Ovary (tissue), 10 donors: ENCODE measurements at regions of chr6 and their contacts with region 1.

Region 1: DNA sequence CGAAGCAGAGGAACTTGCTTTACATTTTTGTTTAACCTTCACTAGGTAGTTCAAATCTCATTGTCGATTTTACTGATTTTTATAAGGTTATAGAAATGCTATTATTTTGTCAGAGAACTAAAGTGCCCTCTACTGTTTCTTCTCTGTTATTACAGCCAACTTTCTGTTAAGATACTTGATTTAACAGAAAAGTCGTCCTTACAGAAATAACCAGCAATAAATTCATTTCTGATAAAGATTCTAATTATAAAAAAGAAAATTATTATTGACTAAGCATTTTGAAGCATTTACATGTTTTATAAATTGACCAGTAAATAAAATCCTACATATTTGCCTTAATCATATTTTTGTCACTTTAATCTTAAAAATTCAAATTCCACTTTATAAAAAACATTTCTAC is 60.8 kb downstream of the OGFRL1 start:
- DNase-seq: no peak
- H3K4me3 ChIP-seq: no peak overlapping the region
- H3K27ac ChIP-seq: no peak overlapping the region
- H3K4me1 ChIP-seq: no peaks in the 10 kb centered on the region
- H3K27me3 ChIP-seq: no peaks in the 10 kb centered on the region
- CTCF ChIP-seq: peak in 2 of 3 donors; percentile 9 to 23
- EP300 ChIP-seq: no peak
- POLR2A ChIP-seq: no peak

Region 2: DNA sequence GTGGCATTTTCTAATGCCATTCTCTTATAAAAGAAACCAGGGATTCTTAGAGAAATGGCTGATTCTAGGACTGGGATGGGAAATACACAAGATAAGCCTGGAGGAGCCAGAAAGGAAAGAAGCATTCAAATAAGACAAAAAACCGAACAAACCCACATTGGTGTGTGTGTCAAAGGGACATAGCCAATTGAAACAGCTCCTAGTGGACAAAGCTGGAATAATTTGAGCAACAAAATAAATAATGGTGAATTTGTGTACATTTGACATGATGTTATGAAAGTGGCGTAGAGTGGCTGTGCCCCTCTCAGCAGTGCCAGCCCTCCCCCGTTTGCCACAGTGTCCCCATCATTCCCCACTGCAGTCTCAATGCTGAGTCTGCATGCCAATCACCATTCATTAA is 448.1 kb before region 1 on chr6:
- intact Hi-C with region 1: no loop called
- DNase-seq: no peak
- H3K4me3 ChIP-seq: no peak overlapping the region
- H3K27ac ChIP-seq: no peak overlapping the region
- H3K4me1 ChIP-seq: no peaks in the 10 kb centered on the region
- H3K27me3 ChIP-seq: no peaks in the 10 kb centered on the region
- CTCF ChIP-seq: no peak
- EP300 ChIP-seq: no peak
- POLR2A ChIP-seq: no peak

Region 3: GRCh38 chr6:70973604-70974003 is 375.8 kb before region 1 on chr6:
- intact Hi-C with region 1: loop called in 1 of 4 experiments (anchors 10 kb)
- DNase-seq: no peak
- H3K4me3 ChIP-seq: no peak overlapping the region
- H3K27ac ChIP-seq: no peak overlapping the region
- H3K4me1 ChIP-seq: no peaks in the 10 kb centered on the region
- H3K27me3 ChIP-seq: no peaks in the 10 kb centered on the region
- CTCF ChIP-seq: no peak
- EP300 ChIP-seq: no peak
- POLR2A ChIP-seq: no peak

Region 4: DNA sequence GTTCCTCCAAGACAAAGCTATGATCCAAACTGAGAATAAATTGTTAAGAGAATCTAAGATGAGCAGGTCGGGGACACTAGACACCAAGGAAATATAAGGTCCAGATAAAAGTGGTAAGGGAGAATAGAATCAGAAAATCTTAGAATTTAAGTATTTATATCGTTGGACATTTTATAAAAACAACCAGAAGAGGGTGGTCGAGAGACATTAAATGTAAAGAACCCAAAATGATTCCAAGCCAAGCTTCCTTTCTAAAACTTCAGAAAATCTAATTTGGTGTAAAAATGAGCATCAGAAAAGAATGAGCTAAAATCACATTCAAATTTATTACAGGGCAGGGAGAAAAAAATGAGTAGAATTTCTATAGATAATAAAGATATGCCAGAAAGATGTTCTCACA is 158.6 kb before region 1 on chr6:
- intact Hi-C with region 1: loop called in 2 of 4 experiments (anchors 10 kb)
- DNase-seq: no peak
- H3K4me3 ChIP-seq: no peak overlapping the region
- H3K27ac ChIP-seq: no peak overlapping the region
- H3K4me1 ChIP-seq: no peaks in the 10 kb centered on the region
- H3K27me3 ChIP-seq: no peaks in the 10 kb centered on the region
- CTCF ChIP-seq: no peak
- EP300 ChIP-seq: no peak
- POLR2A ChIP-seq: no peak

Region 5: DNA sequence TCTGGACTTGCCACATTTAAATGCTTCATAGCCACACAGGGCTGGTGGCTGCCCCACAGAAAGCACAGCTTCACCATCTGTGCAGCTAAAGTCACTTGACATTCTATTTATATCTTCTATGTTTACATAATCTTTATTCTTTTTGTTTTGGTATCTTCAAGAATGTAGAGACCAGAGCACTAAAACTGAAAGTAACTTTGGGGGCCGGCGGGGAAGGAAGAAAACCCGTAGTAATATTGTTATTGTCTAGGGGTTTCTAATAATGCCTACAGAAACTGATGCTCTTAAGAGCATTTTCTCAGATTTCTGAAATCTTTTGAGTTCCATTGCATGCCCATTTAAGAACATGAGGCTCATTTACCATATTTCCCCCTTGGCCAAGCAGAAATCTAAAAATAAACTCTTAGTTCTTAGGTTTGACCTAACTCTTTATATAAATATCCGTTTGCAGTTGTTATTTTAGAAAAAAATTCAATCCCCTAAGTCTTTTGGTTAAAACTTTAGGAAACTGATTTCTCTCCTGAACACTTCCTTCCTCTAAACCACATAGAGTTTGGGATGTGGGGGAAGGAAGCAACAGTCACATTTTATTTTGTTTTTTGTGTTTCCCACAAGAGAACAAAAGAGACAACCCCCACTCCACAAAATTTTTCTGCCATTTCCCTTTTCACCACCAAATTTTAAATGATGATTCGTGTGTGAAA is 146.8 kb after region 1 on chr6:
- intact Hi-C with region 1: no loop called
- DNase-seq: no peak
- H3K4me3 ChIP-seq: peak overlapping the region; percentile 21
- H3K27ac ChIP-seq: peak overlapping the region in 1 of 2 donors; percentile 27
- H3K4me1 ChIP-seq: no peaks in the 10 kb centered on the region
- H3K27me3 ChIP-seq: no peaks in the 10 kb centered on the region
- CTCF ChIP-seq: no peak
- EP300 ChIP-seq: no peak
- POLR2A ChIP-seq: no peak